Activated T-helper 1 cell treated with anti-CD3 and anti-CD28 coated beads, Interleukin-12 subunit alpha, Interleukin-12 subunit beta, Interleukin-2, Interleukin-4 antibody, amounts not matched to agents 30 ng/mL and 10 ng/mL and 1 ng/mL, durations not matched to agents 14 hours and 24 hours and 36 hours (primary cell): ENCODE measurements at regions of chr3 and their contacts with region 1.

Region 1: GRCh38 chr3:101988591-101988990 is 139.3 kb downstream of the NFKBIZ start:
- DNase-seq: no peak
- H3K4me3 Mint-ChIP-seq: no peak overlapping the region
- H3K27ac Mint-ChIP-seq: peak overlapping the region; percentile 47
- H3K4me1 Mint-ChIP-seq: peaks cover 44% of the 10 kb centered on the region
- H3K27me3 Mint-ChIP-seq: peaks cover 11% of the 10 kb centered on the region

Region 2: DNA sequence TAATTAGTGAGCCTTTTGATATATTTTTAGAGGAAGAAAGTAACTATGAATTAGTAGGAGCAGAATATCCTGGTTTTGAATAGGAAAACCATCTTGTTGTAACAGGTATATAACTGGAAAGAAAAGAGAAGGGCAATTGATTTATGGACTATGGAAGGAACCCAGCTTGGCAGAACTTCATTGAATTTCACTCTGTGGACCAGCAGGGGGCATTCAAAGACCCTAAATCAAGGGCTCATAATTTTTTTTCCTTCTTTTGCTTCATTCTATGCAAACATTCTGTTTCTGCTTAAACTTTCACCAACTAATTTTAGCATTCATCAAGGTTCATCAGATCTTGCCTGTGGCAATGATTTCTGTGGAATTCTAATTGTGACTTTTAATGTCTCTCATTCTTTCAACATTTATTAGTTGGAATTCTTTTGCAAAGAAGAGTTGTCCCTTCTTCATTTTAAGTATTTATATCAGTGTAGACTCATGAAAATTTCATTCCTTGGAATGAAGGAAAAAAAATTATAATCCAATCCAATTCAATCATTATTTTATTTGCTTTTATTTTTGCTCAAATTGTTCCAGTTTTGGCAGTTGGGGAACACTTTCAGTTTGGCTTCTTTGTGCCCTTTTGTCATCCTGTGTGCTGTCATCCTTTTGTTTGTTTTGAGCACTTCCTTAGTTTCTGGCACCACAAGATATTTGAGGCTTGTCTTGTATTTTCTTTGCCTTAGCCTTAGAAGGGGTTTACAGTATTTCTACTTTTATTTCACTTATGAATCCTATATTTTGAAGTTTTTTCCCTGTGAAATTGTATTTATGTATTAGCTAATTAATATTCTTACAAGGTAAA is 179.2 kb before region 1 on chr3:
- intact Hi-C with region 1: loop called (anchors 5 kb)
- DNase-seq: no peak
- H3K4me3 Mint-ChIP-seq: no peak overlapping the region
- H3K27ac Mint-ChIP-seq: peak overlapping the region; percentile 27
- H3K4me1 Mint-ChIP-seq: peaks cover 55% of the 10 kb centered on the region
- H3K27me3 Mint-ChIP-seq: no peaks in the 10 kb centered on the region

Region 3: DNA sequence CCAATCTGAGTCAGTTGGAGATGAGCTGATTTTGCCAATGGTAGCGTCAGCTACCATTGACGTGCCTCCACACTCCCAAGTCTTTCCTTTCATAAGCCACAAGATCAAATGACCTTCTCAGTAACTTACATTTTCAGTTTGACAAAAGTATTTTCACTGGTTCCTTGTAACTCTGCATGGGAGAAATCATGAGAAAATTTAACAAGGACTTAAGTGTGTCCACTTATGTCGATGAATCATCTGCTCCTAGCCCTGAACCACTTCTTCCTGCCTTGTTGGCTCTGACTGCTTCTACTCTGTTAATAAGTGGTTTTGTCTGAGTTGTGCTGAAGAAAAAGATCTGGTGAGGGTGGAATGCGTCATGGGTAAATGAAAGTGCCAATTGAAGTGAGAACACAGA is 38.1 kb before region 1 on chr3:
- intact Hi-C with region 1: loop called (anchors 2 kb)
- DNase-seq: no peak
- H3K4me3 Mint-ChIP-seq: no peak overlapping the region
- H3K27ac Mint-ChIP-seq: peak overlapping the region; percentile 1
- H3K4me1 Mint-ChIP-seq: peaks cover 27% of the 10 kb centered on the region
- H3K27me3 Mint-ChIP-seq: peaks cover 2% of the 10 kb centered on the region

Region 4: GRCh38 chr3:102024270-102024904 is 35.8 kb after region 1 on chr3:
- intact Hi-C with region 1: loop called (anchors 1 kb)
- DNase-seq: no peak
- H3K4me3 Mint-ChIP-seq: no peak overlapping the region
- H3K27ac Mint-ChIP-seq: no peak overlapping the region
- H3K4me1 Mint-ChIP-seq: peaks cover 9% of the 10 kb centered on the region
- H3K27me3 Mint-ChIP-seq: peaks cover 2% of the 10 kb centered on the region

Region 5: DNA sequence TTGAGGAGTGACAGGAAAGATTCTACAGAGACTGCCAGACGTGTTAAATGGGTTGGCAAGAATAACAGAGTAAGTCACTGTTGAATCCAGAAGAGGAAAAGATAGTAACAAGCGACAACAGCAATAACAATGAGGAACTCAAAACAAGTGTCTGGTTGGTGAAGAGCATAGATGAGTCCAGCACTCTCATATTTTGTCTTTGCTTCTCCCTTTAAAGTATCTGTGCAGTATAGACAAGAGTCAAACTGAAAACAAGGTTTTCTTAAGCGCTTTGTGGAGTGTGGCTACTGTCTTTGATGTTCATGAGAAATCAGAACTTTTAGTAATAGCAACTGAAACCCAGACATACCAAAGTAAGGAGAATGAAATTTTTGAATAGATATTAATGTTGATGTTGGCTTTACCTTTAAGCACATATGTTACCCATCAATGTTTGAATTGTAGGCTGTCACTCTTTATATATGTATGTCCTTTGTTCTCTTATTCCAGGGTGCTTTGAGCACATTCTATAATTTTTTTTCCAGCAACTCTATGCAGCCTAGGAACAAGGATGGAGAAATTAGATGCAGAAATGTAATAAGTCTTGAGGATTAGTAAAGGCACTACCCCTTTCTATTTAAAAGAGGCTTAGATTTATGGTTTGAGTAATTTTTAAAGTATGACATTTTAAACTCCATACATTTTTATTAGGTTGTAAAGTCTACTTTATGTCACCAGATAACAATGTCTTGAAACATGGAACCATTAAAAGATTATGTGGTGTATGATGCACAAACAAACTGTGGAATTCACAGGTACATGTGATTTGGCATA is 46.3 kb after region 1 on chr3:
- intact Hi-C with region 1: no loop called
- DNase-seq: no peak
- H3K4me3 Mint-ChIP-seq: no peak overlapping the region
- H3K27ac Mint-ChIP-seq: no peak overlapping the region
- H3K4me1 Mint-ChIP-seq: peaks cover 13% of the 10 kb centered on the region
- H3K27me3 Mint-ChIP-seq: peaks cover 4% of the 10 kb centered on the region

Region 6: GRCh38 chr3:102069211-102069662 is 80.6 kb after region 1 on chr3:
- intact Hi-C with region 1: loop called (anchors 5 kb)
- DNase-seq: no peak
- H3K4me3 Mint-ChIP-seq: no peak overlapping the region
- H3K27ac Mint-ChIP-seq: no peak overlapping the region
- H3K4me1 Mint-ChIP-seq: peaks cover 16% of the 10 kb centered on the region
- H3K27me3 Mint-ChIP-seq: no peaks in the 10 kb centered on the region

Region 7: GRCh38 chr3:102085431-102086176 is 97.0 kb after region 1 on chr3:
- intact Hi-C with region 1: no loop called
- DNase-seq: no peak
- H3K4me3 Mint-ChIP-seq: no peak overlapping the region
- H3K27ac Mint-ChIP-seq: peak overlapping the region; percentile 13
- H3K4me1 Mint-ChIP-seq: peaks cover 43% of the 10 kb centered on the region
- H3K27me3 Mint-ChIP-seq: peaks cover 9% of the 10 kb centered on the region